ENCODE measurements at regions of chr11 and their contacts with region 1.

Region 1: GRCh38 chr11:57456960-57457642 is 3.2 kb upstream of the RTN4RL2 start:
- DNase-seq: peak; percentile 80
- ATAC-seq: peak; percentile 59
- H3K4me3 Mint-ChIP-seq: peak overlapping the region; percentile 22
- H3K27ac Mint-ChIP-seq: no peak overlapping the region
- H3K4me1 Mint-ChIP-seq: peaks cover 30% of the 10 kb centered on the region
- H3K27me3 Mint-ChIP-seq: peaks cover 31% of the 10 kb centered on the region

Region 2: GRCh38 chr11:57205041-57205671 is 251.9 kb before region 1 on chr11:
- CTCF ChIA-PET with region 1: no interaction called
- POLR2A ChIA-PET with region 1: no interaction called
- DNase-seq: no peak
- ATAC-seq: no peak
- H3K4me3 Mint-ChIP-seq: no peak overlapping the region
- H3K27ac Mint-ChIP-seq: no peak overlapping the region
- H3K4me1 Mint-ChIP-seq: no peaks in the 10 kb centered on the region
- H3K27me3 Mint-ChIP-seq: peaks cover 6% of the 10 kb centered on the region

Region 3: GRCh38 chr11:57426929-57427726 is 30.0 kb before region 1 on chr11 and contains the start of gene SLC43A3:
- CTCF ChIA-PET with region 1: interaction called, 80 read pairs
- POLR2A ChIA-PET with region 1: no interaction called
- DNase-seq: peak; percentile 80
- ATAC-seq: peak; percentile 70
- H3K4me3 Mint-ChIP-seq: peak within 1 kb of the TSS; percentile 88
- H3K27ac Mint-ChIP-seq: peak within 1 kb of the TSS; percentile 88
- H3K4me1 Mint-ChIP-seq: peaks cover 49% of the 10 kb centered on the region
- H3K27me3 Mint-ChIP-seq: peaks cover 10% of the 10 kb centered on the region
- total RNA-seq, gene SLC43A3: 103 to 120 TPM

Region 4: GRCh38 chr11:57474017-57474802 is 17.1 kb after region 1 on chr11:
- CTCF ChIA-PET with region 1: interaction called, 239 read pairs
- POLR2A ChIA-PET with region 1: interaction called, 3 read pairs
- DNase-seq: peak; percentile 87
- ATAC-seq: peak; percentile 85
- H3K4me3 Mint-ChIP-seq: peak overlapping the region; percentile 28
- H3K27ac Mint-ChIP-seq: peak overlapping the region; percentile 89
- H3K4me1 Mint-ChIP-seq: peaks cover 41% of the 10 kb centered on the region
- H3K27me3 Mint-ChIP-seq: peaks cover 14% of the 10 kb centered on the region

Region 5: DNA sequence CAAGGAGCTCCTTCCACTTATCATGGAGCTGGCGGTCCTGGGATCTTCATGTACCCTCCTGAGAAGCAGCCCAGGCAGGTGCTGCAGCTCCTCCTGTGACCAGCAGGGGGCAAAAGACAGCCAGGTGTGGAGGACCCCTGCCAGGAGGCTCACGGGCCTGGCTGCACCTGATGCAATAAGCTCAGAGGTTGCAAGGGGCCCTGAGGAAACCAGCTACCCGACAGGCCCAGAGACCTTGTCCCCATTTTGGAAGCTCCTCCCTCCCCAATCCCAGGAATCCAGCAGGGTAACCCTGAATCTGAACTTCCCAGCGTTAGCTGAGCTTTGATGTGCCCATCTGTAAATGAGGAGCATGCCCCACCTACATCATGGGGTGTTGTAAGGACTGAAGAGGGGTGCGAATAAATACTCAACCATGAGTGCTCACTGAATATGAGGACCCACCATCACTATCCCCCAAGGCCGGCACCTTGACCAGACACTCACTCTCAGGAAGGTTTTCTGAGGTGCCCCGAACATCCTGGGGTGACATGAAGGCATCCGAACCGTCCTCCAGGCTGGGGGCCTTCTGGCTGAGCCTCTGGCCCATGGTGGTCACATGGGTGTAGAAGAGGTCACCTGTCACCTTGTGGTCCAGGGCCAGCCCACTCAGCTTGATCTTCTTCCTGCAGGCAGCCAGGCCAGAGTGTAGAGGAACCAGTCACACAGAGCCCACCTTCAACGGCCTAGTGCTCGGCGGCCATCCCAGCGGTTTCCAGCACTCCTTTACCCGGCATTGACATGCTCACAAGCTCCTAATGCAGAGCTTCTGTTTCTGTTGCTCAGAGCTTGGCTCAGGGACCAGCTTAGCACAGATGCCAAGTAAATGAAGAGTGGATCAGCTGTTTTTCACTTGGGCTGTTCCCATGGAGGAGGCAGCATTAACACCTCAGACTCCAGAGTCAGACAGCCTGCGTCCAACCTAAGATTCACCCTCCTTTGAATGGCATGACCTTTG is 36.7 kb after region 1 on chr11:
- CTCF ChIA-PET with region 1: interaction called, 39 read pairs
- POLR2A ChIA-PET with region 1: no interaction called
- DNase-seq: peak; percentile 82
- ATAC-seq: peak; percentile 79
- H3K4me3 Mint-ChIP-seq: no peak overlapping the region
- H3K27ac Mint-ChIP-seq: peak overlapping the region; percentile 86
- H3K4me1 Mint-ChIP-seq: peaks cover 12% of the 10 kb centered on the region
- H3K27me3 Mint-ChIP-seq: no peaks in the 10 kb centered on the region

Region 6: GRCh38 chr11:57530596-57531507 is 73.8 kb after region 1 on chr11 and contains the start of gene TIMM10:
- CTCF ChIA-PET with region 1: interaction called, 148 read pairs
- POLR2A ChIA-PET with region 1: interaction called, 3 read pairs
- DNase-seq: peak; percentile 97
- ATAC-seq: peak; percentile 97
- H3K4me3 Mint-ChIP-seq: peak within 1 kb of the TSS; percentile 82
- H3K27ac Mint-ChIP-seq: peak within 1 kb of the TSS; percentile 88
- H3K4me1 Mint-ChIP-seq: peaks cover 47% of the 10 kb centered on the region
- H3K27me3 Mint-ChIP-seq: no peaks in the 10 kb centered on the region
- total RNA-seq, gene TIMM10: 65.4 to 65.8 TPM

Region 7: DNA sequence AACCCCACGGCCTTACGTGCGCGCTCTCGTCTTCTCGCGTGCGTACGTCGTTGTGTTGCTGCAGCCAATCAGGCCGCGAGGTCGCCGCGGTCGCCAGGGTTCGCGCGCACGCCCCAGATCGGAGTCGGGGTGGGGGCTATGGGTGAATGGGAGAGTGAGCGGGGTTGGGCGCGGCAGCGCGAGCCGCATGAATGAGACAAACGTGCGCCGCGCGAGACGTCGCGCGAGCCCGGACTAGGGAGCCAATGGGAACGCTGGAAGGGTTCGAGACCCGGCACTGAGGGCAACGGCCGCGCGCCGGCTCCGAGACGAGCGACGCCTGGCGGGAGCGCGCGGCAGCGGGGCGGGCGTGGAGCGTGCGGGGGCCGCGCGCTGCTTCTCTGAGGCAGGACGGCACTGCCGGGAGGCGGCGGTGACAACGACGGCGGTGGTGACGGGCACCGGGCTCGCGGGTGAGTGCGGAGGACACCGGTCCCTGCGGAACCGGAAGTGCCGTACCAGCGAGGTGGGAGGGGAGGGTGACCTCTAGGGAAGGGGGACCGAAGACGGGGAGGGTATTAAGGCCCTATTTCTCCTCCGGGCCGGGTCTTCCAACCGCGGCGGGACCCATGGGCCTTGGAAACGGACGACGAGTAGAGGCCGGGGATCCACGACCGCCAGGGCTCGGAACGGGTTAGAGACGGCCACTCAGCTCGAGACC is 210.8 kb after region 1 on chr11 and contains the start of gene ZDHHC5:
- CTCF ChIA-PET with region 1: interaction called, 10 read pairs
- POLR2A ChIA-PET with region 1: no interaction called
- DNase-seq: peak; percentile 100
- ATAC-seq: peak; percentile 92
- H3K4me3 Mint-ChIP-seq: peak within 1 kb of the TSS; percentile 96
- H3K27ac Mint-ChIP-seq: peak within 1 kb of the TSS; percentile 99
- H3K4me1 Mint-ChIP-seq: peaks cover 45% of the 10 kb centered on the region
- H3K27me3 Mint-ChIP-seq: no peaks in the 10 kb centered on the region
- total RNA-seq, gene ZDHHC5: 77.8 to 82.4 TPM

Region 8: GRCh38 chr11:57842873-57843272 is 385.8 kb after region 1 on chr11:
- CTCF ChIA-PET with region 1: no interaction called
- POLR2A ChIA-PET with region 1: no interaction called
- DNase-seq: no peak
- ATAC-seq: no peak
- H3K4me3 Mint-ChIP-seq: no peak overlapping the region
- H3K27ac Mint-ChIP-seq: no peak overlapping the region
- H3K4me1 Mint-ChIP-seq: no peaks in the 10 kb centered on the region
- H3K27me3 Mint-ChIP-seq: peaks cover 2% of the 10 kb centered on the region

Measured in activated CD8-positive, alpha-beta T cell treated with anti-CD3 and anti-CD28 coated beads, Interleukin-2, amount 10 ng/mL, durations not matched to agents 7 days and 5 days (primary cell).